ENCODE measurements at regions of chr6 and their contacts with region 1.

Region 1: DNA sequence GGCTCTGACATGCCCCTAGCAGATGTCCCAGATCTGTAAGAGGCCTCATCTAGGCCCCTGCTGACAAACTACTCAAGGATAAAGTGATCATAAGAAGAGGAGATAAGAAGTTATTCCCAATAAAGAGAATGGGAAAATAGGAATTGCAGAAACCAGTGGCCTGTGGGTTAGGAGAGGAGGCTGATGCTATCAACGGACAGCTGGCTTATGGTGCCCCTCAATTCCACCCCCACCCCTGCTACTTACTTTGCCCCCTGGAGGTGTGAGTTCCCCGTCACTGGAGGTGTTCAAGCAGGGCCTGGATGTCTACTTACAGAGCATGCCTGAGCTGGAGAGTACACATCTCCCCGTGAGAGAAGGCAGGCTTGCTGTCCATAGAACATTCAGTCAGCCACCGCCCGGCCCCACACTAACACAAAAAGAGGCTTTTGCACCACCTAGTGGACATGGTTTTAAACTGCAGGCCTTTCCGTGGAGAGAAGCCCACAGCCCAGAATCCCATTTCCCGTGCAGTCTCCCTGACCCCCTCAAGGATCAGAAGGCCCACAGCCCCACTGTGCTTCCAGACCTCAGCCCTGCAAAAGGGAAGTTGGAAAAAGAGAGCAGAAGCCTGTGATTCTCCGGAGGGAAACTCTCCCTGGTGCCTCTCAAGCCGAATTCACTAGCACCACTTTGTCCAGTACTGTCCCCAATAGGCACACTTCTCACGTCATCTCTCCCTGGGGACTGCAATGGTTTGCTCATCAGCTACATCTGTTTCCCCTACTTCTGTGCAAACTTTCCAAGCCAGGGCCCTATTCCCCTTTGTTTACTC is 23.8 kb upstream of the BNIP5 start:
- DNase-seq: peak in 1 of 2 donors; percentile 88
- H3K4me3 ChIP-seq: no peak overlapping the region
- H3K27ac ChIP-seq: peak overlapping the region; percentile 49 to 59
- H3K4me1 ChIP-seq: peaks cover 0 to 27% of the 10 kb centered on the region in 2 donors
- H3K27me3 ChIP-seq: no peaks in the 10 kb centered on the region
- CTCF ChIP-seq: peak; percentile 83 to 93 (median 91)

Region 2: DNA sequence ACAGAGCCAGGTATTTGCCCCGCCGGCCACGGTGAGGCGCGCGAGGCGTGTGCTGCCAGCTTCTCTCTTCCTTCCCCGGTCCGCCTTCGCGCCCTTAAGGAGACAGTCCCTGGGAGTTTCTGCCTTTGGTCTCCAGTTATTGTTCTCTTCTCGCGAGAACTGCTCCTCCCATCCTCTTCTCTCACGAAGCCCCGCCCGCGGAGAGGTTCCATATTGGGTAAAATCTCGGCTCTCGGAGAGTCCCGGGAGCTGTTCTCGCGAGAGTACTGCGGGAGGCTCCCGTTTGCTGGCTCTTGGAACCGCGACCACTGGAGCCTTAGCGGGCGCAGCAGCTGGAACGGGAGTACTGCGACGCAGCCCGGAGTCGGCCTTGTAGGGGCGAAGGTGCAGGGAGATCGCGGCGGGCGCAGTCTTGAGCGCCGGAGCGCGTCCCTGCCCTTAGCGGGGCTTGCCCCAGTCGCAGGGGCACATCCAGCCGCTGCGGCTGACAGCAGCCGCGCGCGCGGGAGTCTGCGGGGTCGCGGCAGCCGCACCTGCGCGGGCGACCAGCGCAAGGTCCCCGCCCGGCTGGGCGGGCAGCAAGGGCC is 332.9 kb before region 1 on chr6 and contains the start of gene MAPK14:
- intact Hi-C with region 1: loop called (anchors 5 kb)
- DNase-seq: peak; percentile 97 to 100
- H3K4me3 ChIP-seq: peak within 1 kb of the TSS; percentile 97 to 98
- H3K27ac ChIP-seq: peak within 1 kb of the TSS; percentile 85 to 94
- H3K4me1 ChIP-seq: peaks cover 0 to 35% of the 10 kb centered on the region in 2 donors
- H3K27me3 ChIP-seq: no peaks in the 10 kb centered on the region
- CTCF ChIP-seq: peak; percentile 93 to 97 (median 93)
- total RNA-seq, gene MAPK14: 37.3 TPM

Region 3: DNA sequence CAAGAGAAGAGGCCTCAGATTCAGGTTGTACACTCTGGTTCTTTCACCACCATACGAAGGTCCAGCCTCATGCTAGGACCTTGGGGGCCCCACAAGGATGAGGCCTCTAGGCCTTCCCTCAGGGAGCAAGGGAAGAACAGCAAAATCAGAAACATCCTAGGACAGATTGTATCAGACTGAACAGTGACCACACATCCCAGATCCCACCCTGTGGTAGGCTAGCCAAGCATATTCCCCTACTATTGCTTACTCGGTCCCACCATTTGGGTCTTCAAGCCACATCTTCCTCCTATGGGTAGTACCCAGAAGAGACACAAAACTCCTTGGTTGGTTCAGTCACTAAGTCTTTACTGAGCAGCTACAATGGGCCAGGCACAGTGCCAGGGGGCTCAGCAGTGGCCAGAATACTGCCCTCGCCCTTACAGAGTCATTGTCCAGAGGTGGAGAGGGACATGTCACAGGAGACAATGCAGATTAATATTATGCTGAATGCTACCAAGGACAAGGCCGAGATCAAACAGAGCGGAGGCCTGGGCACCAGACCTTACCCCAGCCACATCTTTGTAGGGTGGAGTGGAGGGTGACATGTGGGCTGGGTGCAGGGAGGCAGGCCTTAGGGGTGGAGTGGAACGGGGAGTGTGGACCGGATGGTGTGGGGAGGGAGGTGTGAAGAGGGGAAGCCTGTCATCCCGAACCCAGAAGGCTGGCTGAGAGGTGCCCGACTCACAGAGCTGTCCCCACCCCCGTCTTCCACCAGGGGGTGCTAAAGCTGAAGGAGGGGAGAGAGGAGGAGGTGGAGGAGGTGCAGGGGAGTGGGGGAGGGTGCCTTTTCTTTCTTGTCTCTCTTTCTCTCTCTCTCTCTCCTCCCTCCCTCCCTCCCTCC is 236.9 kb before region 1 on chr6:
- intact Hi-C with region 1: loop called (anchors 5 kb)
- DNase-seq: peak; percentile 50 to 90
- H3K4me3 ChIP-seq: no peak overlapping the region
- H3K27ac ChIP-seq: no peak overlapping the region
- H3K4me1 ChIP-seq: peaks cover 0 to 4% of the 10 kb centered on the region in 2 donors
- H3K27me3 ChIP-seq: no peaks in the 10 kb centered on the region
- CTCF ChIP-seq: peak; percentile 68 to 75 (median 72)

Region 4: DNA sequence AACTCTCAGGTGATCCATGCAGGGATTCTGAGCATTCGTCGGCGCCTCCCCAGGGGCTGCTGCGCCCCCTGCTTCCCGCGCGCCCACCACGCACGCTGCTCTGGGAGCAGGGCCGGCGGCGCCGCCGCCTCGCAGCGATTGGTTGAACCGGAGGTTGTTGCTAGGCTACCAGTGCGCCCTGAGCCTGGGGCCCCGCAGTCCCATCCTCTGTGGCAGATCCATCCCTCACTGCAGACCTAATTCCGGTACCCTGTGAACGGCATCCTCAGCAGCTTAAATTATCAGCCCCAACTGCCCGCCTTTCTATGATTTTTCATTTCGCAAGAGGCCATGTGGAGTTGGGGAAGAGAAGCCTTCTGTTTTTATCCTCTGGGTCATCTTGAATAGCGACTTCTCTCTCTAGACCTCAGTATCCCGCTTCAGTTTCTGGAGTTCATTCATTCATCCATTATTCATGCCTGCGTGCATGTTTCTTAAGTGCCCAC is 75.2 kb before region 1 on chr6:
- intact Hi-C with region 1: no loop called
- DNase-seq: no peak
- H3K4me3 ChIP-seq: no peak overlapping the region
- H3K27ac ChIP-seq: no peak overlapping the region
- H3K4me1 ChIP-seq: no peaks in the 10 kb centered on the region
- H3K27me3 ChIP-seq: peaks cover 3% of the 10 kb centered on the region
- CTCF ChIP-seq: no peak

Region 5: DNA sequence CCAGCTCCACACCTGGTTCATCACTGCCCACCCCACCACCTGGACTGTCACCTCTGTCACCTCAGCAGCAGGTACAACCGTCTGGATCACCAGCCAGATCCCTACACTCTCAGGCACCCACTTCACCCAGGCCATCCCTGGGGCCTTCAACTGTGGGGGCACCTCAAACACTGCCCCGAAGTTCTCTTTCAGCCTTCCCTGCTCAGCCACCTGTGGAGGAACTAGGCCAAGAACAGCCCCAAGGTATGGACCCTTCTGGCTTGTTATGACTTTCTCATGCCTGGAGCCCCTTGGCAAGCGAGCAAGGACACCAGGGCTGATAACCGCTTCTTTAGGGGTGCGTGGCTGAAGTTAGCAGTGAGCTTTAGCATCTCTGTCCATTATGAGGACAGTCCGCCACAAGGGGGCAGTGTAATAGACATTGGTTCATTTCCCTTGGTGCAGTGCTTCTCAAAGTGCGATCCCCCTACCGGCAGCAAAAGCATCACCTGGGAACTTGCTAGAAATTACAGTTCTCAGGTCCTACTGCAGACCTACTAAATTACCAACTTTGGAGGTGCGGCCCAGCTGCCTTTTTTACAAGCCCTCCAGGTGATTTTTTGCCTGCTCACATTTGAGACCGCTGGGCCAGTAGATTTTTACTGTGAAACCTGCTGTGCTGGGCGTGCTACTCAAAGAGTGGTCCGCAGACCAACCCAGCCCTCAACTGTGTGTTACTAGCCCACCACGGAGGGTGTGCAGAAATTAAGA is 58.0 kb before region 1 on chr6:
- intact Hi-C with region 1: loop called (anchors 1 kb)
- DNase-seq: peak; percentile 33 to 93
- H3K4me3 ChIP-seq: no peak overlapping the region
- H3K27ac ChIP-seq: peak overlapping the region; percentile 30 to 62
- H3K4me1 ChIP-seq: peaks cover 12 to 13% of the 10 kb centered on the region in 2 donors
- H3K27me3 ChIP-seq: no peaks in the 10 kb centered on the region
- CTCF ChIP-seq: peak; percentile 73 to 84 (median 82)

Region 6: DNA sequence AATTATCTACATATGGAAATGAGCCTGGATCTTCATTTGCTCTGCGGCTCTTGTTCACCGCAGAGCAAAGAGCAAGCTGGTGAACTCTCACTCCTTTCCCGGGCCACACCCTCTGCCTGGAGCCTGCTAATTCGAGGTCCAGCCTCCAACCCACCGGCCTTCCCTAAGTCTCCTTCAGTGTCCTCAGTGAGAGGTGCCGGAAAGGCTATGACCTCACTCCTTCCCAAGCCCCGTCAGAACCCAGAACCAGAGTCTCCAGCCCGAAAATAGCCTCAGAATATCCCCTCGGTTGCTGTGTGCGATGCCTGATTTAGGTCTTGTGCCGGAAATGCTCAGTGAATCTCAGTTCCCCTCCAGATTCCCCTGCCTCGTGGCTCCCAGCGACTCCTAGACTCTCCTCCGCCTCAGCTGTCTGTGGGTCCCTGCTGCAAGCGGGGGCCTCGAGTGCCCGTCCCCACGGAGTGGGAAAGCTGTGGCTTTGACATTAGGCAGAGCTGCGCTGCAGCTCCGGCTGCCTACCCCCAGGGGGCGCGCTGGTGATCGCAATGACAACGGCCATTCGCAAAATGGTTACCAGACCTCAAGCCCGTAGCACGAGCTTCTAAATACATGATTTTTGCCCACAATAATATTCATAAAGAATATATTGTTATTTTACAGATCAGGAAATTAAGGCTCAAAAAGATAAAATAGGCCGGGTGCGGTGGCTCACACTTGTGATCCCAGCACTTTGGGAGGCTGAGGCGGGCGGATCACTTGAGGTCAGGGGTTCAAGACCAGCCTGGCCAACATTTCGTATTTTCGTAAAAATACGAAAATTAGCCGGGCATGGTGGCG is 19.6 kb before region 1 on chr6:
- intact Hi-C with region 1: loop called (anchors 1 kb)
- DNase-seq: peak in 1 of 2 donors; percentile 91
- H3K4me3 ChIP-seq: peak overlapping the region in 1 of 2 donors; percentile 52
- H3K27ac ChIP-seq: peak overlapping the region in 1 of 2 donors; percentile 53
- H3K4me1 ChIP-seq: peaks cover 0 to 20% of the 10 kb centered on the region in 2 donors
- H3K27me3 ChIP-seq: no peaks in the 10 kb centered on the region
- CTCF ChIP-seq: peak; percentile 90 to 97 (median 97)

Measured in ascending aorta (tissue), 2 donors.